ENCODE measurements at regions of chr7 and their contacts with region 1.

Region 1: DNA sequence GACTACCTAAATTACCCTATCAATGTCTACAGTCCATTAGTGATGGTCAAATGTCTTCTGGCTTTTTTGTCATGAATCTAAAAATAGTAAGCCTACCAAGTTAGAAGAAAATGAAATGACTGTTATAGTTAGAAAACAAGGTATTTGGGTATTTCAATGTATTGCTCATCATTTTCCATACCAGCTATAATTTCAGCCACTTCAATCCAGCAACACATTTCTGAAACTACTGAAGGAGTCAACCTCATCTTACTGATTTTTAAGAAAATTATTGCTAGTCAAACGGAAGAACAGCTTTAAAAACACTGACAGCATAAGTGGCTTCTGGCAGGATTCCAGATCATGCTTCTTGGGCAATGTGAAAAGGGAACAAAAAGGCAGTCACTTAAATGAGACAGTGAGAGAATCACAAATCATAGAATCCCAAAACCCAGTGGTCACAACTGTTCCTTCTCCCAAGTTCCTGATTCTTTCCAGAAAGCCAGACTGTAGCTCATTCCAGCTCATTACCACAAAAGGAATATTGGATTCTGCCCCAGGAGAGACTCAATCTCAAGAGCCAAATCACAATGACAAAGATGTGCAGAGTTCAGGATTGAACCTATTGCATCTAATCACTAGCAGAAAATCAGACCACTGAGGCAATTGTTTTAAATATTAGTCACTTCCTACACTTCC is 61.2 kb upstream of the LRRN3 start:
- DNase-seq: peak; percentile 75
- H3K4me3 Mint-ChIP-seq: peak overlapping the region; percentile 68
- H3K27ac Mint-ChIP-seq: peak overlapping the region; percentile 96
- H3K4me1 Mint-ChIP-seq: peaks cover 54% of the 10 kb centered on the region
- H3K27me3 Mint-ChIP-seq: no peaks in the 10 kb centered on the region

Region 2: GRCh38 chr7:110889330-110889729 is 140.4 kb before region 1 on chr7:
- intact Hi-C with region 1: no loop called
- DNase-seq: no peak
- H3K4me3 Mint-ChIP-seq: no peak overlapping the region
- H3K27ac Mint-ChIP-seq: no peak overlapping the region
- H3K4me1 Mint-ChIP-seq: peaks cover 9% of the 10 kb centered on the region
- H3K27me3 Mint-ChIP-seq: no peaks in the 10 kb centered on the region

Region 3: GRCh38 chr7:110909117-110909516 is 120.6 kb before region 1 on chr7:
- intact Hi-C with region 1: loop called (anchors 5 kb)
- DNase-seq: no peak
- H3K4me3 Mint-ChIP-seq: no peak overlapping the region
- H3K27ac Mint-ChIP-seq: no peak overlapping the region
- H3K4me1 Mint-ChIP-seq: peaks cover 29% of the 10 kb centered on the region
- H3K27me3 Mint-ChIP-seq: no peaks in the 10 kb centered on the region

Region 4: GRCh38 chr7:111012799-111013675 is 16.7 kb before region 1 on chr7:
- intact Hi-C with region 1: loop called (anchors 1 kb)
- DNase-seq: peak; percentile 88
- H3K4me3 Mint-ChIP-seq: peak overlapping the region; percentile 83
- H3K27ac Mint-ChIP-seq: peak overlapping the region; percentile 90
- H3K4me1 Mint-ChIP-seq: peaks cover 66% of the 10 kb centered on the region
- H3K27me3 Mint-ChIP-seq: no peaks in the 10 kb centered on the region

Region 5: DNA sequence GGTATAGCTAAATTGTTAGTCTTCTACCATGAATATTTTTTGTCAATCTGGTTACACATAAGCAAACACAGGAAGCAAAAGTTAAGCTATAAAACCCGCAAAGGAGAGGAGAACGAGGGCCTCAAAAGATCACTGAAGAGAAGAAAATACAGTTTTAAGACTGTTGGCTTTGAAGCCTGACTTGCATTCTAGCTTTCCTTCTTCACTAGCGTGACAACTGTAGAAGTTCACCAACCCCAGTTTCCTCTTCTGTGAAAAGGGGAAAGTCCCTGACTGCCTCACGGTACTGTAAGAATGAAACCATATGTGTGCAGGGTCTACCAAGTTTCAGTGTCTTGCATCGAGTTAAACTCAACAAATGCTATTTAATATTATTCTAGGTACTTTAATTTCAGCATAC is 53.7 kb after region 1 on chr7:
- intact Hi-C with region 1: loop called (anchors 1 kb)
- DNase-seq: peak; percentile 93
- H3K4me3 Mint-ChIP-seq: peak overlapping the region; percentile 58
- H3K27ac Mint-ChIP-seq: peak overlapping the region; percentile 86
- H3K4me1 Mint-ChIP-seq: peaks cover 70% of the 10 kb centered on the region
- H3K27me3 Mint-ChIP-seq: peaks cover 2% of the 10 kb centered on the region

Region 6: GRCh38 chr7:111103678-111104274 is 74.1 kb after region 1 on chr7:
- intact Hi-C with region 1: no loop called
- DNase-seq: no peak
- H3K4me3 Mint-ChIP-seq: peak overlapping the region; percentile 20
- H3K27ac Mint-ChIP-seq: peak overlapping the region; percentile 74
- H3K4me1 Mint-ChIP-seq: peaks cover 57% of the 10 kb centered on the region
- H3K27me3 Mint-ChIP-seq: no peaks in the 10 kb centered on the region

Region 7: GRCh38 chr7:111138196-111138569 is 108.5 kb after region 1 on chr7:
- intact Hi-C with region 1: loop called (anchors 5 kb)
- DNase-seq: peak; percentile 86
- H3K4me3 Mint-ChIP-seq: peak overlapping the region; percentile 76
- H3K27ac Mint-ChIP-seq: peak overlapping the region; percentile 96
- H3K4me1 Mint-ChIP-seq: peaks cover 23% of the 10 kb centered on the region
- H3K27me3 Mint-ChIP-seq: no peaks in the 10 kb centered on the region